ENCODE measurements at regions of chr10 and their contacts with region 1.

Region 1: DNA sequence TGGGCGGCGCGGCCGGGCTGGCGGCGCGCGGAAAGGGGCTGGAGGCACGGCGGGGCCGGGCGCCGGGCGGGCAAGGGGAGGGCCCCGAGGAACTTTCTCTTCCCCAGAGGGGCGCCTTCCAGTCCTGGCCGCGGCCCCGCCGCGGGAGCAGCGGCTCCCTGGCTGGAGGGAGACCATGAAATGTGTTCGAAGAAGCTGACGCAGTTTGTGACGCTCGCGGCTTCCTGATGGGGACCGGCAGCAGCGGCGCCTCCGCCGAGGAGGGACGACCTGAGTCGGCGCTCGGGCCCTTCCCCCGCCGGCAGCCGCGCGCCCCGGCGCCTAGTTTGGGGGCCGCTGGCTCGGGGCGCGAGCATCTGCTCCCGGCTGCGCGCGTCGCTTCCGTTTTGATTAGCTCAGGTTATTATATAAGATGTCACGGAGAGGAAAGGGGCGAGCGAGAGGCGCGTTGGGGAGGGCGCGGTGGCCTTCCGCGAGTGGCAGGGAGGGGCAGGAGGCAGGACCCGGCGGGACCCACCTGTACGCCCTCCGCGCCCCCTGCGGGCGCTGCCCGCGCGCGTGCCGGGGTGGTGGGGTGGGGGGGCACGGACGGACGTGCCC is 57.1 kb upstream of the PCGF5 start:
- DNase-seq: peak; percentile 61 to 82 (median 76)
- H3K4me3 ChIP-seq: peak overlapping the region; percentile 98
- H3K27ac ChIP-seq: peak overlapping the region; percentile 100
- H3K4me1 ChIP-seq: peaks cover 1% of the 10 kb centered on the region
- H3K27me3 ChIP-seq: no peaks in the 10 kb centered on the region
- CTCF ChIP-seq: peak in 1 of 3 donors; percentile 27
- EP300 ChIP-seq: no peak
- POLR2A ChIP-seq: peak; percentile 35

Region 2: GRCh38 chr10:90805211-90805610 is 358.2 kb before region 1 on chr10:
- intact Hi-C with region 1: no loop called
- DNase-seq: no peak
- H3K4me3 ChIP-seq: no peak overlapping the region
- H3K27ac ChIP-seq: no peak overlapping the region
- H3K4me1 ChIP-seq: no peaks in the 10 kb centered on the region
- H3K27me3 ChIP-seq: no peaks in the 10 kb centered on the region
- CTCF ChIP-seq: no peak
- EP300 ChIP-seq: no peak
- POLR2A ChIP-seq: no peak

Region 3: GRCh38 chr10:91051829-91052228 is 111.5 kb before region 1 on chr10:
- intact Hi-C with region 1: loop called in 1 of 4 experiments (anchors 10 kb)
- DNase-seq: peak; percentile 51 to 74 (median 63)
- H3K4me3 ChIP-seq: no peak overlapping the region
- H3K27ac ChIP-seq: no peak overlapping the region
- H3K4me1 ChIP-seq: peaks cover 8% of the 10 kb centered on the region
- H3K27me3 ChIP-seq: no peaks in the 10 kb centered on the region
- CTCF ChIP-seq: no peak
- EP300 ChIP-seq: no peak
- POLR2A ChIP-seq: no peak

Region 4: GRCh38 chr10:91123246-91123645 is 40.1 kb before region 1 on chr10:
- intact Hi-C with region 1: no loop called
- DNase-seq: no peak
- H3K4me3 ChIP-seq: no peak overlapping the region
- H3K27ac ChIP-seq: no peak overlapping the region
- H3K4me1 ChIP-seq: no peaks in the 10 kb centered on the region
- H3K27me3 ChIP-seq: no peaks in the 10 kb centered on the region
- CTCF ChIP-seq: no peak
- EP300 ChIP-seq: no peak
- POLR2A ChIP-seq: no peak

Region 5: DNA sequence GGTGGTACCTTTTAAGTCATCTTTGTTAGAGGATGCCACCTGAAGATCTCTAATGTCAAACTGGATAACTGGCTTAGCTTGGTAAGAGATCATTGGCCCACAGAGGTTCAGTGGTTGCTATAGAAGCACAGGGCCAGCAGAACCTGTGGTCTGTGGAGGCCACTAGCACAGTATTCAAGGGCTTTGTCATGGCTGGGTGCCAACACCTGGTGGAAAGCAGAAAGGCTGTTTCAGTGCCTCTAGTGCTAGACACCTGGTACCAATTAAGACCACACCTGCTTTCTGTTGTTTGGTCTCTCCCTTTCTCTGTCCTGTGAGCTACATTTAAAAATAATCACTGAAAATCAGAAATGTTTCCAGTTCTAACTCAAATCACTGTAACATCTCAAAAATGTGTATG is 47.1 kb after region 1 on chr10:
- intact Hi-C with region 1: loop called in 1 of 4 experiments (anchors 10 kb)
- DNase-seq: peak in 2 of 5 donors; percentile 13 to 32
- H3K4me3 ChIP-seq: no peak overlapping the region
- H3K27ac ChIP-seq: no peak overlapping the region
- H3K4me1 ChIP-seq: peaks cover 3% of the 10 kb centered on the region
- H3K27me3 ChIP-seq: no peaks in the 10 kb centered on the region
- CTCF ChIP-seq: no peak
- EP300 ChIP-seq: no peak
- POLR2A ChIP-seq: no peak